A673 (cell line): ENCODE measurements at regions of chr15 and their contacts with region 1.

Region 1: GRCh38 chr15:41610048-41610447 is 50.2 kb upstream of the MGA start:
- DNase-seq: no peak
- H3K4me3 ChIP-seq: no peak overlapping the region
- H3K27ac ChIP-seq: no peak overlapping the region
- H3K4me1 ChIP-seq: no peaks in the 10 kb centered on the region
- H3K27me3 ChIP-seq: no peaks in the 10 kb centered on the region
- CTCF ChIP-seq: no peak

Region 2: GRCh38 chr15:41331833-41332787 is 277.9 kb before region 1 on chr15 and contains the start of gene OIP5:
- CTCF ChIA-PET with region 1: no interaction called
- POLR2A ChIA-PET with region 1: no interaction called
- intact Hi-C with region 1: no loop called
- DNase-seq: peak; percentile 100
- H3K4me3 ChIP-seq: peak within 1 kb of the TSS; percentile 78
- H3K27ac ChIP-seq: peak within 1 kb of the TSS; percentile 91
- H3K4me1 ChIP-seq: peaks cover 10% of the 10 kb centered on the region
- H3K27me3 ChIP-seq: no peaks in the 10 kb centered on the region
- CTCF ChIP-seq: peak; percentile 63
- total RNA-seq, gene OIP5: 31.0 and 36.1 TPM in 2 replicates

Region 3: GRCh38 chr15:41544650-41545015 is 65.4 kb before region 1 on chr15:
- CTCF ChIA-PET with region 1: no interaction called
- POLR2A ChIA-PET with region 1: interaction called, 24 read pairs
- intact Hi-C with region 1: no loop called
- DNase-seq: no peak
- H3K4me3 ChIP-seq: peak overlapping the region; percentile 85
- H3K27ac ChIP-seq: peak overlapping the region; percentile 80
- H3K4me1 ChIP-seq: no peaks in the 10 kb centered on the region
- H3K27me3 ChIP-seq: no peaks in the 10 kb centered on the region
- CTCF ChIP-seq: no peak